HCT116 (cell line): ENCODE measurements at regions of chr4 and their contacts with region 1.

Region 1: GRCh38 chr4:86895692-86896488 is 3.7 kb upstream of the C4orf36 start:
- DNase-seq: peak; percentile 61
- ATAC-seq: peak; percentile 31
- H3K4me3 ChIP-seq: no peak overlapping the region
- H3K27ac ChIP-seq: no peak overlapping the region
- H3K4me1 ChIP-seq: peaks cover 6 to 32% of the 10 kb centered on the region in 2 experiments
- H3K27me3 ChIP-seq: no peaks in the 10 kb centered on the region
- CTCF ChIP-seq: peak; percentile 64 to 90 (median 87)
- POLR2A ChIP-seq: no peak
- RAD21 ChIP-seq: peak; percentile 96

Region 2: DNA sequence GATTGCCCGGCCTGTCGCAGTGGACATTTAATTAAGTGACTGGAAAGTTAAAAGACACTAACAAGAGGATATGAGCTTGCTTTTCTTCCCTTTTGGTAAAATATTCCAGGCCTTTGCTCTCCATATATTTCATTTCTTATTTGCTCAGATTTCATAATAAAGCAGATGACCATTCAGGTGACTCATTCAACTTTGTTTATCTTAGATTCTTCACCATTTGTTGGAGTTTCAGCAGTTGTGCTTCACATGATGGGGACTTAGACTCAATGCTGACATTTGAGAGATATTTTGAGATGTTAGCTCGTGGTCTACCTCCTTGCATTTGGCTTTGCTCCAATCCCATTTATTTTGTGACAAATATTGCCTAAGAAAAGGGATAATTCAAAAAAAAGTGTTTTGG is 1108.8 kb before region 1 on chr4:
- CTCF ChIA-PET with region 1: no interaction called
- POLR2A ChIA-PET with region 1: no interaction called
- RAD21 ChIA-PET with region 1: no interaction called
- intact Hi-C with region 1: loop called (anchors 10 kb)
- DNase-seq: no peak
- ATAC-seq: no peak
- H3K4me3 ChIP-seq: no peak overlapping the region
- H3K27ac ChIP-seq: no peak overlapping the region
- H3K4me1 ChIP-seq: no peaks in the 10 kb centered on the region
- H3K27me3 ChIP-seq: no peaks in the 10 kb centered on the region
- CTCF ChIP-seq: no peak
- POLR2A ChIP-seq: no peak
- RAD21 ChIP-seq: no peak

Region 3: DNA sequence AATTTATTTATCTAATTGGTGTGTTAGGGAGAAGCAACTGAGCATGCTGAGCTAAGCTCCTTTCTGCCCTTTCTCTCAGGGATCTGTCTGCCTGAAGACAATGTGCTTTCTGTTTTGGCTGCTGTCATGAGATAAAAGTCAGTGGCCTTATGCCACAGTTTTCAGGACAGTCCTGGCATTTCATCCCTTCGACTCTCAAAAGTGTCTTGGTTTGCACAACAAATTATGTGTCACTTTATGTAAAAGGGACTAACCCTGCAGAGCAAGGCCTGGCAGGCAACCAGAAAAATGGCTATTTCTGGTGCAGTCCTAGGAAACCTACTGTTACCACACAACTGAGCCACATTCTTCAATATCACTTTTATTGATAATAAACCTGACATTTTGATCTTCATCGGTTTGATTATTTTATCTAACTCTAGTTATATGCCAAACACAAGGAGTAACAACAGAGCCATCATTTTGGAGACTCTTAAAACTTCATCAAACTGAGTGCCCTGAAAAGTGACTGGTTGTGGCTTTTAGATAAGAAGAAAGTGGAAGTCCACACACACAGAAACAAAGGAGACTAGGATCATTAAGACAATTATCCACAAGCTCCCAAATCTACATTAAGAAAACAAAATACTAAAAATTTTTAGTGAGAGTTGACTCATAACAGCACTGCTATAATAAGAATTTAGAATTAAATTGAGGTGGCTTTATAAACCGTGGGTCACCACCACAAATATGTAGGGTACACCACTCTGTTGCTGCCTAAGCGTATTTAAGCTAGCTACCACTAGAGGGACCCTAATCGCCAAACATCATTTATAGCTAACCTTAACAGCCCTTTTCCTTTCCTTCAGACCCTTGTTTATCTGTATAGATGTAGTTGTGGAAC is 397.7 kb before region 1 on chr4:
- CTCF ChIA-PET with region 1: interaction called, 34 read pairs
- POLR2A ChIA-PET with region 1: no interaction called
- RAD21 ChIA-PET with region 1: interaction called, 5 to 8 read pairs
- intact Hi-C with region 1: loop called (anchors 1 kb)
- DNase-seq: peak; percentile 47
- ATAC-seq: peak; percentile 97
- H3K4me3 ChIP-seq: no peak overlapping the region
- H3K27ac ChIP-seq: no peak overlapping the region
- H3K4me1 ChIP-seq: peaks cover 8% of the 10 kb centered on the region in 2 experiments; a peak in 3 of 4 replicates
- H3K27me3 ChIP-seq: no peaks in the 10 kb centered on the region
- CTCF ChIP-seq: peak; percentile 61 to 84 (median 80); a peak in 5 of 6 replicates
- POLR2A ChIP-seq: no peak
- RAD21 ChIP-seq: peak; percentile 72

Region 4: GRCh38 chr4:86593688-86594558 is 302.0 kb before region 1 on chr4 and contains the start of gene PTPN13:
- CTCF ChIA-PET with region 1: no interaction called
- POLR2A ChIA-PET with region 1: no interaction called
- RAD21 ChIA-PET with region 1: interaction called in 1 of 2 experiments, 4 read pairs
- intact Hi-C with region 1: loop called (anchors 2 kb)
- DNase-seq: peak; percentile 97
- ATAC-seq: peak; percentile 96
- H3K4me3 ChIP-seq: peak within 1 kb of the TSS; percentile 76 to 84
- H3K27ac ChIP-seq: peak within 1 kb of the TSS; percentile 64
- H3K4me1 ChIP-seq: peaks cover 12 to 17% of the 10 kb centered on the region in 2 experiments; a peak in 3 of 4 replicates
- H3K27me3 ChIP-seq: no peaks in the 10 kb centered on the region
- CTCF ChIP-seq: no peak
- POLR2A ChIP-seq: peak; percentile 71
- RAD21 ChIP-seq: no peak
- total RNA-seq, gene PTPN13: 14.6 TPM

Region 5: GRCh38 chr4:86831262-86832130 is 64.4 kb before region 1 on chr4:
- CTCF ChIA-PET with region 1: no interaction called
- POLR2A ChIA-PET with region 1: no interaction called
- RAD21 ChIA-PET with region 1: no interaction called
- intact Hi-C with region 1: loop called (anchors 2 kb)
- DNase-seq: peak; percentile 70
- ATAC-seq: peak; percentile 89
- H3K4me3 ChIP-seq: peak overlapping the region in 1 of 2 experiments; percentile 20; a peak in 2 of 4 replicates
- H3K27ac ChIP-seq: peak overlapping the region; percentile 26
- H3K4me1 ChIP-seq: peaks cover 6 to 22% of the 10 kb centered on the region in 2 experiments
- H3K27me3 ChIP-seq: no peaks in the 10 kb centered on the region
- CTCF ChIP-seq: no peak
- POLR2A ChIP-seq: no peak
- RAD21 ChIP-seq: peak; percentile 6; the same call in 1 of the 2 replicates

Region 6: DNA sequence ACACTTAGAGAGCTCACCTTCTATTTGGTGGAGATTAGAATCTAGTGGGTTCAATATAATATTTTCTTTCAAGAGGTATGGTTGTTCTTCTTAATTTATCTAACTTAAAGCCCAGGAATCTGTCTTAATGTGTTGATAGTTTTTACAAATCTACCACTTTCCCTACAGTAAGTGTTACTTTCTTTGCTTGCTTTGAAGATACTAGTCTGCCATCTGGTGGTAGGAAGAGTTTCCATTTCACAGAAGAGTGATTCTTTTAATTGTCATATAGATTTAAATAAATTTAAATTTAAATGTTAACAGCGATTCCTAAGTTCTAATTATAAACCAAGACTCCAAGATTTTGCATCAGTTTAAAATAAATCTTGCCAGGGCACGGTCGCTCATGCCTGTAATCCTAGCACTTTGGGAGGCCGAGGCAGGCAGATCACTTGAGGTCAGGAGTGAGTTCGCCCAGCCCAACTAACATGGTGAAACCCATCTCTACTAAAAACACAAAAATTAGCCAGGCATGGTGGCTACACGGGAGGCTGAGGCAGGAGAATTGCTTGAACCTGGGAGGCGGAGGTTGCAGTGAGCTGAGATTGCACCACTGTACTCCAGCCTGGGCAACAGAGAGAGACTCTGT is 570.0 kb after region 1 on chr4:
- CTCF ChIA-PET with region 1: no interaction called
- POLR2A ChIA-PET with region 1: no interaction called
- RAD21 ChIA-PET with region 1: no interaction called
- intact Hi-C with region 1: loop called (anchors 1 kb)
- DNase-seq: peak; percentile 38
- ATAC-seq: peak; percentile 63
- H3K4me3 ChIP-seq: no peak overlapping the region
- H3K27ac ChIP-seq: no peak overlapping the region
- H3K4me1 ChIP-seq: no peaks in the 10 kb centered on the region
- H3K27me3 ChIP-seq: no peaks in the 10 kb centered on the region
- CTCF ChIP-seq: peak; percentile 46 to 81 (median 51)
- POLR2A ChIP-seq: no peak
- RAD21 ChIP-seq: peak; percentile 82

Region 7: DNA sequence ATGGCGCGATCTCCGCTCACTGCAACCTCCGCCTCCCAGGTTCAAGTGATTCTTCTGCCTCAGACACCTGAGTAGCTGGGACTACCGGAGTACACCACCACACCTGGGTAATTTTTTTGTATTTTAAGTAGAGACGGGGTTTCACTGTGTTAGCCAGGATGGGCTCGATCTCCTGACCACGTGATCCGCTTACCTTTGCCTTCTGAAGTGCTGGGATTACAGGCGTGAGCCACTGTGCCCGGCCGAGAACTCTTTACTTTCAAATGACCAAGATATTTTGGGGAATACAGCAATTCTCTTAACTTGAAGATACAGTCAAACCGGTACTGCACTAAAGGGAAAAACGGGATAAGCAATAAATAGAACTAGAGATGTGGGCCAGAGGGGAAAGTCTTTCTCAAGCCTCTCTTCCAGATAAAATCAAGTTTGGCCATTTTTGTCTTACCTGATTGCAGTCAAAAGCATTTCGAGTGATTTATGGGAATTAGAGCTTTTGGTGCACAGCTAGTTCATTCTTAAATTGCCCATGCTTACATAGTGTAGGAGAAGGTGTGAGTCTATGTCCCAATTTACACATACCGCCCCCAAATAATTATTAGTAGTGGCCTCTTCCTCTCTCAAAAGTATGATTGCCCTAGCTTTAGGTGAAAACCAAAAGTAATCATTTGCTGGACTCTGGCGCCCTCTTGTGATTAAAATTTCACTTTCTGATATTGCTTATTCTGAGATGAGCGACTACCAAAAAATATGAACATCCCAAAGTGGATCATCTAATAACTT is 1315.8 kb after region 1 on chr4:
- CTCF ChIA-PET with region 1: no interaction called
- POLR2A ChIA-PET with region 1: no interaction called
- RAD21 ChIA-PET with region 1: no interaction called
- intact Hi-C with region 1: loop called (anchors 10 kb)
- DNase-seq: peak; percentile 47
- ATAC-seq: peak; percentile 83
- H3K4me3 ChIP-seq: no peak overlapping the region
- H3K27ac ChIP-seq: no peak overlapping the region
- H3K4me1 ChIP-seq: peaks cover 0 to 2% of the 10 kb centered on the region in 2 experiments; a peak in 1 of 4 replicates
- H3K27me3 ChIP-seq: no peaks in the 10 kb centered on the region
- CTCF ChIP-seq: peak; percentile 45 to 87 (median 80); a peak in 5 of 6 replicates
- POLR2A ChIP-seq: no peak
- RAD21 ChIP-seq: peak; percentile 94